A549 (cell line): ENCODE measurements at regions of chr2 and their contacts with region 1.

Region 1: DNA sequence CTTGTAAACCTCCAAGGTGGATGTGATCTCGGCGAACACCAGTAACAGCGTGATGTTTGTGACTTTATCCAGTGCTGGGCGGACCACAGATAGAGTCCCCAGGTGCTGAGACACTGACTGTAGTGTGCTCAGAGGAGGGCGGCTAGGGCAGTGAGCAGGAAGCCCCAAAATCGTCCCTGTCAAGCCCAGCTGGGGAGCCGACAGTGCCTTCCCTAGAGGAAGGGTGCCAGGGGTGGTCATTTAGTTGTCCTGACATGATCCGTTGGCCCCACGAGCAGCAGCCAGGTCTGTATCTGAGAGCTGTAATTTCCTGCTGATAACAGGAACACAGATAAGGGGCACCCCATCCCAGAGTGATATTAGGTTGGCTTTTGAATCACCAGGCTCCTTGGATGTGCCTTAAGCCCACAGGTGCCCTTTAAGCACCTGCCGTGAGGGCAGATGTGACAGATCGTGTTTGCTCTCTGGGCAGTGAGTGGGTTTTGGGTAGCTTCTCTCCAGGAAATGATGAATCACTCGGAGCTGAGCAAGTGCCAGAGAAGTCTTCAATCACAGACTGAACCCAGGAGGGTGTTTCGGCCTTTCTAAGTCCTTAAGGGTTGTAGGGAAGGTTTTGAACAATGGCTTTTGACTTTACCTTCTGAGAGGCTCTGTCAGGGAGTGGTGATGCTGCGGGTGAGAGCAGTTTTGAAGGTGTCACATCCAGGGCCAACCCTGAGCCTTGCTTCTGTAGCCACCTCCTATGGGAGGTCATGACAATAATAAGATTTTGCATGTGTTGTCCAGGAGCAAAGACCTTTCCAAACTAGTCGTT is 7.7 kb downstream of the LPIN1 start:
- DNase-seq: peak; percentile 31 to 37
- ATAC-seq: peak; percentile 69 to 81
- H3K4me3 ChIP-seq: no peak overlapping the region
- H3K27ac ChIP-seq: peak overlapping the region in 1 of 2 experiments; percentile 11; a peak in 3 of 6 replicates
- H3K4me1 ChIP-seq: peaks cover 21% of the 10 kb centered on the region
- CTCF ChIP-seq: no peak
- EP300 ChIP-seq: no peak
- POLR2A ChIP-seq: no peak
- RAD21 ChIP-seq: no peak

Region 2: GRCh38 chr2:11738589-11739436 is 15.3 kb before region 1 on chr2:
- CTCF ChIA-PET with region 1: interaction called, 28 read pairs
- POLR2A ChIA-PET with region 1: interaction called, 6 read pairs
- DNase-seq: peak; percentile 40 to 67
- ATAC-seq: peak; percentile 91 to 95
- H3K4me3 ChIP-seq: no peak overlapping the region
- H3K27ac ChIP-seq: peak overlapping the region; percentile 4 to 66; a peak in 4 of 6 replicates
- H3K4me1 ChIP-seq: peaks cover 27% of the 10 kb centered on the region
- CTCF ChIP-seq: peak; percentile 49
- EP300 ChIP-seq: no peak
- POLR2A ChIP-seq: no peak
- RAD21 ChIP-seq: peak; percentile 54 to 72

Region 3: DNA sequence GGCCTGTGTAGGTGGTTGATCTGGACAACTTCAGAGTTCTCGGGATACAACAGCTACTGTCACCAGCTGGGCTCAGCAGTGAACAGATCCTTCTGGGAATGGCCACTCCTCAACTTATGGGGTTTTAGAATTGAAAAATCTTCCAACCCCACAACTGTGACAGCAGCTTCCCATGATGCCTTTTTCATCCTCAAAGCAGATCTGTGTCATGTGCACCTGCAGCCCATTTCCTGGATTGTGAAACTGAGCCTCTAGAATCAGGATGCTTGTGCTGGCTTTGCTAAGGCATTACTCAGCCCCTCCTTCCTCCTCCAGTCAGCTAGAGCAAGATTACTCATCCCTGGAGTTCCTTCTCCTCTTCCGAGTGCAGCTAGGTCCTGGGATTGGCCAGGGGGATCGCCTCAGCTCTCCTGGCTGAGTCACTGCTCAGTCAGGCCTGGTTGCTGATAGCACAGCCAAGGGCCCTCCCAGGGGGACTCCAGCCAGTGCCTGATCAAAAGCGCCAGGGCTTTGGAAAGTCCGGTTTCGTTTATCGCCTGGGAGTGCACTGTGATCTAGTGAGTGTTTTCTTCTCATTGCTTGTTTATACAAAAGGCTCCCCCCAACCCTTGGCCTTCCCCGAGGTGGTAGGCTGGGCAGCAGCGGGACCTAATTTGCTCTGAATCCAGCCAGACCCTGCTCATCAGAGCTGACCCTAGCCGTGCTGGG is 10.1 kb before region 1 on chr2:
- CTCF ChIA-PET with region 1: interaction called, 28 read pairs
- POLR2A ChIA-PET with region 1: interaction called, 6 read pairs
- DNase-seq: peak; percentile 99 to 100
- ATAC-seq: peak; percentile 87 to 96
- H3K4me3 ChIP-seq: peak overlapping the region; percentile 24; the same call in 1 of the 3 replicates
- H3K27ac ChIP-seq: peak overlapping the region; percentile 86 to 90
- H3K4me1 ChIP-seq: peaks cover 48% of the 10 kb centered on the region
- CTCF ChIP-seq: 0 out of 3 replicates have a peak, but pooled peaks have one; percentile 32
- EP300 ChIP-seq: peak in 1 of 2 experiments; percentile 44; a peak in 1 of 5 replicates
- POLR2A ChIP-seq: no peak
- RAD21 ChIP-seq: 0 out of 5 replicates have a peak, but pooled peaks of 1 of the 2 experiments have one; percentile 19

Region 4: DNA sequence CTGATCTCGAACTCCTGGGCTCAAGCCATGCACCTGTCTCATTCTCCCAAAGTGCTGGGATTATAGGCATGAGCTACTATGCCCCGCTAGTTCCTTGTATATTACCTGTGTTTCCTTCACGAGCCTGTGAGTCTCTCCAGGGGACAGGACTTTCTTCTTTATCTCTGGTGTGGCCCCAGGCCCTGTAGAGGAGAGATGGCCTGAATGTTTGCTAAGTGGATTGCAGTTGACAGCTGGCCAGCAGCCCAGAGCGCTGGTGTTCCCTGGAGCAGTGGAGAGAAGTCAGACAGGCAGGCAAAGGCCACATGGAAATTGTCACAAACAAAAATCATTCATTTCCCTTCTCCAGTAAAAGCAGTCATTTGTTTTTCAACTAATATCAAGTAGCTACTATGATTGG is 10.3 kb after region 1 on chr2:
- CTCF ChIA-PET with region 1: interaction called, 11 read pairs
- POLR2A ChIA-PET with region 1: no interaction called
- DNase-seq: no peak
- ATAC-seq: no peak
- H3K4me3 ChIP-seq: no peak overlapping the region
- H3K27ac ChIP-seq: no peak overlapping the region
- H3K4me1 ChIP-seq: peaks cover 5% of the 10 kb centered on the region; the same call in 1 of the 3 replicates
- CTCF ChIP-seq: no peak
- EP300 ChIP-seq: no peak
- POLR2A ChIP-seq: no peak
- RAD21 ChIP-seq: no peak

Region 5: DNA sequence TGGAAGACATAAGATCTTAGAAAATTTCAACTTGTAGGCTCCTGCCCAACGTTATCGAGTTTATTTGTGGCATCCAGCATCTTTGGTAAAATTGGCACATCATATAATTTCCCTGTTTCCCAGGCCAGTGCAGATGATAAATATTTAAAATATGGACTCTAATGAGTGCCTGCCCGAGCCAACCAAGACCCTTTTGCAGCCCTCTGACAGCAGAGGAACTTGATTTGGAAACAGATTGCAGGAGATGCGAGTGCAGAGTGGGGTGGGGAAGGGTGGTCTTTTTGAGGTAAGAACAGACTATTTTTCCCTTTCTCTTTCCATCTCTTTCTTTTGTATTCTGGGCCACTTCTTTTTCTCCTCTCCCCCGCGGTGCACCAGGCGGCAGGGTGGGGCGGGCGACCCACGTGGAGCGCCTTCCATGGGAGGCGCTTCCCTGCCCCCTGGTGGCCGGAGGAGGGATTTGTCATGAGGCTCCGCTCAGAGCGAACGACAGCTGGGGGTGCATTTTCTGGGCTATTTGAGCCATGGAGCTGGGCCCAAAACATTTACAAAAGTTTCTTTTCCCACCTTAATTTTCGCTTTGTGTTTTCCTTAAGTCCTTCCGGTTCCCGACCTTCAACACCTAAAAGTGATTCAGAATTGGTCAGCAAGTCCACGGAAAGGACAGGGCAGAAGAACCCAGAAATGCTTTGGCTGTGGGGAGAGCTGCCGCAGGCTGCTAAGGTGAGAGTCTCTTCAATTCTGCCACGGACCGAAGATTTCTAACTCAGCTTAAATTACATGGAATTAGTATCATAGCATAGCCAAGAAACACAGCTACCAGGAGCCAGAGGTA is 25.0 kb after region 1 on chr2:
- CTCF ChIA-PET with region 1: interaction called, 66 read pairs
- POLR2A ChIA-PET with region 1: no interaction called
- DNase-seq: peak; percentile 66 to 92
- ATAC-seq: peak; percentile 93 to 99
- H3K4me3 ChIP-seq: no peak overlapping the region
- H3K27ac ChIP-seq: peak overlapping the region; percentile 18 to 63; a peak in 4 of 6 replicates
- H3K4me1 ChIP-seq: 0 out of 3 replicates have a peak, but pooled peaks cover 3% of the 10 kb centered on the region
- CTCF ChIP-seq: peak; percentile 99
- EP300 ChIP-seq: no peak
- POLR2A ChIP-seq: no peak
- RAD21 ChIP-seq: peak; percentile 97 to 98